ENCODE measurements at regions of chr20 and their contacts with region 1.

Region 1: DNA sequence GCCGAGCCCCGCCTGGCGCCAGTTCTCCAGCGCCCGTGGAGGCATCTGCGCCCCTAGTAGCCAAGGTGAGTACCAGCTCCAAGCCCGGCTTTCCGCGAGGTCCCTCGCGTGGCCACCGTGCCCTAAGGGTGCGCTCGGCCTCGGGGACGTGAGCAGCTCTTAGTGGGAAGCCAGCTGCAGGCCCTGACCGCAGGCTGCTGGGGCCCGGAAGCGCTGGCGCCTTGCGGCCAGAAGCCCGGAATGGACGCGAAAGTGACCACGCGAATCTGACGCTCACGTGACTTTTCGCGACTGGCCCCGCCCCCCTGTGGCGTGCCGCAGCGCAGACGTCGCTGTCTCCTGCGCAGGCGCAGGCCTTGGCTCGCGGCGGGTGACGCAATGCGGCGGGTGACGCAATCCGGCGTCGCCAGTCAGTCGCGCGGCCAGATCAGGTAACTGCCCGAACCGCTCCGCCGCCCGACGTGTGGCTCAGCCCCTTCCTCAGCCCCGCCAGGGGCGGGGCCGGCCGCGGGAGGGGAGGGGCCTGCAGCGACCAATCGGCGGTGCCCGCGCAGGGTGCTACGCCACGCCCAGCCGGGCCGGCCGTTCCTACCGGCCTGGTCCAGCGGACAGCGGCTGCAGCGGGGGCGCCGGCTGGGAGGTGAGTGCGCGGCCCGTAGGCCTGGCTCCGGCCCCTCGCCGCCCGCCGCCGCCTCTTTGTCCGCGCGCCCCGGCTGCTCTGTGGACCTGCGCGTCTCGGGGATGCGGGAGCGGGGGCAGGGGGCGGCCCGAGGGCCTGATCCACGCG is at the start of gene GZF1:
- DNase-seq: peak; percentile 94 to 99
- H3K4me3 ChIP-seq: peak within 1 kb of the TSS; percentile 76 to 77
- H3K27ac ChIP-seq: peak within 1 kb of the TSS; percentile 99 to 100
- H3K4me1 ChIP-seq: peaks cover 6 to 25% of the 10 kb centered on the region in 2 donors
- H3K27me3 ChIP-seq: no peaks in the 10 kb centered on the region
- CTCF ChIP-seq: peak in 1 of 3 experiments; percentile 25
- total RNA-seq, gene GZF1: 54.8 TPM

Region 2: DNA sequence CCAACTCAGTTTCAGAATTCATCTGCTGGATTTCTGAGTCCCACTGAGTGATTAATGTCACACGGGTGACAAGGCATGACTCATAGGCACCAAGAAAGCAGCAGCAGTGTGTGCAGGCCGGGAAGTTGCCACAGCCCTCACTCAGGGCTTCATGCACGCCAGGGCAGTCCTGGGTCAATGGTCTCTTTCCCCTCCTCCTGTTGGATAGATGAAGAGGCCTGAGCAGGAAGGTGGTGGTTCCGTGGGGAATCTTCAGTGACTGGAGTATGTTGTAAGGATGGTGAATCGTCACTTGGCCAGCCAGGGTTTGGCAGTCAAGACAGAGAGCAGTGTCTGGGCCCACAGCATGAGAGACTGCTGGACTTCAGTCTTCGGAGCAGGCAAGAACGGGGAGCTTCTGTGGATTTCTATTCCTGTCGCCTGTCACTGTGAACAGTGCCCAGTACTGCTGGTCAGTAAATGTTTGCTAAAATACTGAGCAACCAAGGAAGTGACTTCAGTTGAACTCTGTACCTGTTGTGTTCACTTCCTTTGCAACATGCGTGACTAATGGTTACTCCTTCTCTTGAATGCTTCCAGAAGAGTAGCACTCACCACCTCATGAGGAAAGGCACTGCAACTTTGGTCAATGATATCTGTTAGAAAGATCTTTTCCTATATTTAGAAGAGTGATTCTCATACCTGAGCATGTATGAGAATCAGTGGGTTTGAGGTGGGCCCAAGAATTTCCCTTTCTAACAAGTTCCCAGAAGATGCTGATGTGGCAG is 213.6 kb before region 1 on chr20:
- intact Hi-C with region 1: loop called (anchors 5 kb)
- DNase-seq: peak; percentile 79 to 95
- H3K4me3 ChIP-seq: no peak overlapping the region
- H3K27ac ChIP-seq: peak overlapping the region; percentile 93 to 96
- H3K4me1 ChIP-seq: peaks cover 30 to 87% of the 10 kb centered on the region in 2 donors
- H3K27me3 ChIP-seq: no peaks in the 10 kb centered on the region
- CTCF ChIP-seq: no peak

Region 3: DNA sequence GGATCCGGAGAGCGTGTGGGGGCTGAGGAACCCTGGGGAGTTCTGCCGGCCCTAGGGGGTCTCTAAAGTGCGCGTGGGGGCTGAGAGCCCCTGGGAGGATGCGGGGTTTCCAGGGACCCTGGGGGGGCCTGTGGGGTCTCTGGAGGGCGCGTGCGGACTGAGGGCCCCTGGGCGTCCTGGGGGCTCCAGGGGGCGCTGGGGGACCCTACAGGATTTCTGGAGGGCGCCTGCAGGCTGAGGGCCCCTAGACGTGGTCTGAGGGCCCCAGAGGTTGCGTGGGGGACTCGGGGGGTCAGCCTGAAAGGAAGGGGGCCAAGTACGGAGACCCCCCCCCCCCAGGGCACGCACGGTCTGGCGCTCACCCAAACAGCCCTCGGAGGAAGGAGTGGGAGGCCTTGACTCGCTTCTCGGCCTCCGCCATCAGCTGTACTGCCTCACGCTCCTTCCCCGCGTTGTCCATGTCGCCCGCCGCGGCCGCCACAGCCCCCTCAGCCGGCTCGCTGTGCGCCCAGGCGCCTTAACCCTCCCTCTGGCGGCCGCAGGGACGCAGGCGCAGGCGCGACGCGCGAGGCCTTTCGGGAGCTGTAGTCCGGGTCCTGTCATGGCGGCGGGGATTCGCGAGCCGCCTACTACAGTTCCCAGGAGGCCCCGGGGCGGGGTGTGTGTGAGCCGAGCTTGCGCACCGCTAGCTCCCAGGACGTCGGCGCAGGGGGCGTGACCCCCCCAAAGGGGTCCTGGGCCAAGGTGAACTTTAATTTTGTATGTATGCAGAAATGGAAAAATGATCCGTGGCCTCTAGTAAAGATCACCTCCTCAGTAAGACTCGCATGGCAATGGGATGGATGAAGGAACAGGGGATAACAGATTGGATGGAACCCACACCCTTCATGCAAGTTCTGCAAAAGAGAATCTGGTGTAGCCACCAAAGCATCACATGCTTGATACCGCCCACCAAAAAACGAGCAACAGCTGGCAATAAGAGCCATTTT is 59.4 kb after region 1 on chr20 and contains the start of gene NAPB:
- intact Hi-C with region 1: loop called (anchors 1 kb)
- DNase-seq: peak; percentile 76 to 96
- H3K4me3 ChIP-seq: peak within 1 kb of the TSS; percentile 70 to 99
- H3K27ac ChIP-seq: peak within 1 kb of the TSS; percentile 87 to 91
- H3K4me1 ChIP-seq: peaks cover 0 to 6% of the 10 kb centered on the region in 2 donors
- H3K27me3 ChIP-seq: no peaks in the 10 kb centered on the region
- CTCF ChIP-seq: peak; percentile 40 to 84 (median 44)
- total RNA-seq, gene NAPB: 0.75 TPM

Region 4: GRCh38 chr20:23637282-23638221 is 275.8 kb after region 1 on chr20 and contains the start of gene CST3:
- intact Hi-C with region 1: loop called (anchors 5 kb)
- DNase-seq: peak; percentile 55 to 93
- H3K4me3 ChIP-seq: peak within 1 kb of the TSS; percentile 89 to 94
- H3K27ac ChIP-seq: peak within 1 kb of the TSS; percentile 91 to 99
- H3K4me1 ChIP-seq: peaks cover 10 to 22% of the 10 kb centered on the region in 2 donors
- H3K27me3 ChIP-seq: no peaks in the 10 kb centered on the region
- CTCF ChIP-seq: peak in 1 of 3 experiments; percentile 9
- total RNA-seq, gene CST3: 2,609 TPM